MCF 10A (cell line): ENCODE measurements at regions of chr20 and their contacts with region 1.

Region 1: DNA sequence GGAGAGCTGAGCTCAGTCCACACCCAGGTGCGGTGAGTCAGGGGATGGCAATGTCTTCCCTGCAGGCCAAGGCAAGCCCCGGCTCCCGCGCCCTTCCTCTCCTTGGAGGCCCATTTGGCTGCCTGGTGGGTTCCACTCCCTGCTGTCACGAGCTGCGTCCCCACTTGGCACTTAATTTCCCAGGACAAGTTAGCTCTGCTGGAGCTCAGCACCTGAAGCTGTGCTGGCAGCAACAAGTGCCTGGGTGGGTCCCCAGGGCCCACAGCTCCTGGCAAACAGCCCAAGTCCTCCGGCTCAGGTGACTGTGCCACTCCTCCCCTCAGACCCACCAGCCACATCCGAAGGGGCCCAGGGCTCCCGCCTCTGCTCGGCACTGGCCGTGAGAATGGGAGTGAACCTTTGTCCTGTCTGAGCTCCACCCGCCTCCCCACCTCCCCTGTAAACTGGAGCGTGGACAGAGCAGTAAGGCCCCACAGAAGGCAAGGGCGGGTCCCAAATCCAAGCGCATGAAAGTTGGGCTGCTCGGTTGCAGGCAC is 17.0 kb downstream of the LAMA5 start:
- DNase-seq: peak; percentile 95
- H3K4me3 Mint-ChIP-seq: peak overlapping the region; percentile 53
- H3K27ac Mint-ChIP-seq: peak overlapping the region; percentile 93
- H3K4me1 Mint-ChIP-seq: peaks cover 22% of the 10 kb centered on the region
- H3K27me3 Mint-ChIP-seq: no peaks in the 10 kb centered on the region
- CTCF ChIP-seq: no peak

Region 2: DNA sequence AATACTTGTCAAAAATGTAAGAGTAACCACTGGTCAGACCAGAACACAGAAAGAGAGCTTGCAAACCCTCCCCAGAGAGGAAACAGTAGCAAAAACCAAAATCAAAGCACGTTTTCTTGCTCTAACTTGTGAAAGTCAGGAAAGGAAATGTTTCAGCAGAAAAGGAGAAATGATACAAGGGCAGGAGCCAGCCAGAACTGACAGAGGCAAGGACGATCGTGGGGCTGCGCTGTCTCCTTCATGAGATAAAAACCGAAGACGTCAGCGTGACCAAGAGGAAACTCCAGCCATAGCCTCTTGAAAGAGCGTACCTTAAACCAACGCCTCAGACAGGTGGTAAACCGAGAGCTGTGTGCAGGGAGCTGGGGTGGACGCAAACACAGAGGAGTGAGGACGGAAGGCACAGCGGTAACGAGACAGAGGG is 10.5 kb before region 1 on chr20:
- CTCF ChIA-PET with region 1: interaction called, 3 read pairs
- POLR2A ChIA-PET with region 1: interaction called, 23 read pairs
- intact Hi-C with region 1: no loop called
- DNase-seq: no peak
- H3K4me3 Mint-ChIP-seq: no peak overlapping the region
- H3K27ac Mint-ChIP-seq: no peak overlapping the region
- H3K4me1 Mint-ChIP-seq: no peaks in the 10 kb centered on the region
- H3K27me3 Mint-ChIP-seq: no peaks in the 10 kb centered on the region
- CTCF ChIP-seq: no peak

Region 3: DNA sequence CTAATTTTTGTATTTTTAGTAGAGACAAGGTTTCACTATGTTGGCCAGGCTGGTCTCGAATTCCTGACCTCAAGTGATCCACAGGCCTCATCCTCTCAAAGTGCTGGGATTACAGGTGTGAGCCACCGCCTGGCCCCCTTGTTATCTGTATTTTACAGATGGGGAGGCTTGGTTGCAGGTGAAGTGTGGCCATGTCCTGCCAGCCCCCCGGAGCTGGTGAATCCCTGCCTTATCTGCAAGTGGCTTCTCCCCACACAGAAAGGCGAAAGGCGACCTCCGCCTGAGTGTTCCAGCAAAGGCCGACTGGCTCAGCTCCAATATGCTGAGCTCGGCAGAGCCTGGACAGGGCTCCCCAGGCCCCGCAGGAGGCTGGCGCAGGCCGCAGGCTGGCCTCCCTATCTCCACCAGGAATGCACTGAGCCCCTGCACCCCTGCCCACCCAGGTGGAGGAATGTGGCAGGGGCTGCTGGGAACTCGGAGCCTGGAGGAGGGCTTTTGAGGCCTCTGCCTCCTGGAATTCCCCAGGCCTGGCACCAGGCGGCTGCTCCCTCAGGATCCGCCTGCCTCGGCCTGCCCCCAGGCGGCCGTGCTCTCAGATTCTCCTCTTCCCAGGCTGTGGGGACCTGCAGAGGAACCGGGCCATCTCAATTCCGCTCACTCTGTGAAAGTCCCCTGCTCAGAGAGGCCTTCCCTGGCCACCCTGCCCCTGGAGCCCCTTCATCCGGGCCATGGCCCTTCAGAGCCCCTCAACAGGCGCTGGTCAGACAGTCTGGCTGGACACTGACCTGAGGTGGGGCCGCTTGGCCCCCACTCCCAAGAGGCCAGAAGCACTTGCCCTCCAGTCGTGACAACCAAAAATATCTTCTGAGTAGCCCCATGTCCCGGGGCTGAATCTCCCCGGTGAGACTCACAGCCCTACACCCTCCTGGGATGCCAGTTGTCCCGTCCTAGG is 26.2 kb after region 1 on chr20:
- CTCF ChIA-PET with region 1: interaction called, 24 read pairs
- POLR2A ChIA-PET with region 1: interaction called, 347 read pairs
- intact Hi-C with region 1: loop called (anchors 1 kb)
- DNase-seq: peak; percentile 52
- H3K4me3 Mint-ChIP-seq: no peak overlapping the region
- H3K27ac Mint-ChIP-seq: no peak overlapping the region
- H3K4me1 Mint-ChIP-seq: peaks cover 11% of the 10 kb centered on the region
- H3K27me3 Mint-ChIP-seq: no peaks in the 10 kb centered on the region
- CTCF ChIP-seq: no peak

Region 4: GRCh38 chr20:62607366-62608217 is 257.4 kb after region 1 on chr20:
- CTCF ChIA-PET with region 1: no interaction called
- POLR2A ChIA-PET with region 1: no interaction called
- intact Hi-C with region 1: no loop called
- DNase-seq: no peak
- H3K4me3 Mint-ChIP-seq: no peak overlapping the region
- H3K27ac Mint-ChIP-seq: no peak overlapping the region
- H3K4me1 Mint-ChIP-seq: peaks cover 7% of the 10 kb centered on the region
- H3K27me3 Mint-ChIP-seq: peaks cover 11% of the 10 kb centered on the region
- CTCF ChIP-seq: no peak